PC-9 (cell line): ENCODE measurements at regions of chr20 and their contacts with region 1.

Region 1: GRCh38 chr20:22684072-22684762 is 99.8 kb upstream of the FOXA2 start:
- DNase-seq: peak; percentile 56 to 68
- H3K4me3 ChIP-seq: no peak overlapping the region
- H3K27ac ChIP-seq: no peak overlapping the region
- H3K4me1 ChIP-seq: no peaks in the 10 kb centered on the region
- H3K27me3 ChIP-seq: no peaks in the 10 kb centered on the region
- CTCF ChIP-seq: peak; percentile 92

Region 2: DNA sequence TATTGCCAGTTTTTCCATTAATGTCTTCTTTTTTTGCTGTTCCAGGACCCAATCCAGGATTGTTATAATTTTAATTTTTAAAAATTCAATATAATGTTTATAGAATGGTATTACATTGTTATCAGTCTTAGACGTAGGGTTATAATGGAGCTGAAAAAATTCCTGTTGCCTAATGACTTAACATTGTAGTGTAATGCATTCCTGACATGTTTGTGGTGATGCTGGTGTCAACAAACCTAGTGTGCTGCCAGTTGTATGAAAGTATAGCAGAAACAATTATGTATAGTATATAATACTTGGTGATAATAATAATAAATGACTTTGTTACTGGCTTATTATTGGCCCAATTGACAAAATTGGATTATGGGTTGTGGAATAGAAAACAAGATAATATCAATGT is 1528.0 kb before region 1 on chr20:
- CTCF ChIA-PET with region 1: no interaction called
- POLR2A ChIA-PET with region 1: no interaction called
- intact Hi-C with region 1: no loop called
- DNase-seq: peak in 1 of 2 experiments; percentile 64
- H3K4me3 ChIP-seq: no peak overlapping the region
- H3K27ac ChIP-seq: no peak overlapping the region
- H3K4me1 ChIP-seq: no peaks in the 10 kb centered on the region; the same call in 1 of the 2 replicates
- H3K27me3 ChIP-seq: no peaks in the 10 kb centered on the region
- CTCF ChIP-seq: no peak

Region 3: GRCh38 chr20:22333885-22334545 is 350.2 kb before region 1 on chr20:
- CTCF ChIA-PET with region 1: interaction called, 17 read pairs
- POLR2A ChIA-PET with region 1: no interaction called
- intact Hi-C with region 1: loop called (anchors 1 kb)
- DNase-seq: peak in 1 of 2 experiments; percentile 65
- H3K4me3 ChIP-seq: no peak overlapping the region
- H3K27ac ChIP-seq: no peak overlapping the region
- H3K4me1 ChIP-seq: no peaks in the 10 kb centered on the region
- H3K27me3 ChIP-seq: peaks cover 47% of the 10 kb centered on the region
- CTCF ChIP-seq: peak; percentile 85

Region 4: DNA sequence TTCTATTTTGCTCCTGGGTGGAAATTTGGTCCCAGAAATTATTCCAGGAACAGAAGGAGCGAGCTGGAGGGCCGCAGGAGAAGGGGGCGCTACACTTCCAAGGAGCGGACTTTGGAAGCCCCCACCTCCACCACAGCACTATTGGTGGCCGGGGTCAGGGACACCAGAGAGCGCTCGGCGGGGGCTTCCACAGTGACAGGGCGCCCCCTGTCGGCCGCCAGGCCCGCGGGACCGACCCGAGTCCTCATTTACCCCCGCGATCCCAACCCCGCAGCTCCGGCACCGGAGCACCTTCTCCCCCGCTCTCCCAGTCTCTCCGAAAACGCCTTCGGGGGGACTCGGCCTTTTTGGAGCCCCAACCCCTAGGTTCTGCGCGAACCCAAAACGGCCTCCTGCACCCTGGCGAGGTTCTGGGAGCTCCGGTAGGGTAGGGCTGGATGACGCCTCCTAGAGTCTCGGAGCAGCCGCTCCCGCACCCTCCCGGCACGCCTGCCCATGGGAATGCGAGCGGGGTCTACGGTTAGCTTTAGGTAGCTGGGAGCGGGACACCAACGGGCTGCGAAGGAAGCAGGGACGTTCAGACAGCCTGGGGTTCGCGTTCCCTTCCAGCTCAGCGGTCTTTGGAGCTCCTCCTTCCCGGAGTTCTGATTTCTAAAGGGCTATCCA is 97.4 kb before region 1 on chr20:
- CTCF ChIA-PET with region 1: no interaction called
- POLR2A ChIA-PET with region 1: interaction called, 3 read pairs
- intact Hi-C with region 1: loop called (anchors 10 kb)
- DNase-seq: no peak
- H3K4me3 ChIP-seq: no peak overlapping the region
- H3K27ac ChIP-seq: no peak overlapping the region
- H3K4me1 ChIP-seq: no peaks in the 10 kb centered on the region
- H3K27me3 ChIP-seq: no peaks in the 10 kb centered on the region
- CTCF ChIP-seq: peak; percentile 64